Activated naive CD8-positive, alpha-beta T cell treated with anti-CD3 and anti-CD28 coated beads, Interleukin-2, amount 10 ng/mL, durations not matched to agents 7 days and 5 days (primary cell): ENCODE measurements at regions of chr1 and their contacts with region 1.

Region 1: DNA sequence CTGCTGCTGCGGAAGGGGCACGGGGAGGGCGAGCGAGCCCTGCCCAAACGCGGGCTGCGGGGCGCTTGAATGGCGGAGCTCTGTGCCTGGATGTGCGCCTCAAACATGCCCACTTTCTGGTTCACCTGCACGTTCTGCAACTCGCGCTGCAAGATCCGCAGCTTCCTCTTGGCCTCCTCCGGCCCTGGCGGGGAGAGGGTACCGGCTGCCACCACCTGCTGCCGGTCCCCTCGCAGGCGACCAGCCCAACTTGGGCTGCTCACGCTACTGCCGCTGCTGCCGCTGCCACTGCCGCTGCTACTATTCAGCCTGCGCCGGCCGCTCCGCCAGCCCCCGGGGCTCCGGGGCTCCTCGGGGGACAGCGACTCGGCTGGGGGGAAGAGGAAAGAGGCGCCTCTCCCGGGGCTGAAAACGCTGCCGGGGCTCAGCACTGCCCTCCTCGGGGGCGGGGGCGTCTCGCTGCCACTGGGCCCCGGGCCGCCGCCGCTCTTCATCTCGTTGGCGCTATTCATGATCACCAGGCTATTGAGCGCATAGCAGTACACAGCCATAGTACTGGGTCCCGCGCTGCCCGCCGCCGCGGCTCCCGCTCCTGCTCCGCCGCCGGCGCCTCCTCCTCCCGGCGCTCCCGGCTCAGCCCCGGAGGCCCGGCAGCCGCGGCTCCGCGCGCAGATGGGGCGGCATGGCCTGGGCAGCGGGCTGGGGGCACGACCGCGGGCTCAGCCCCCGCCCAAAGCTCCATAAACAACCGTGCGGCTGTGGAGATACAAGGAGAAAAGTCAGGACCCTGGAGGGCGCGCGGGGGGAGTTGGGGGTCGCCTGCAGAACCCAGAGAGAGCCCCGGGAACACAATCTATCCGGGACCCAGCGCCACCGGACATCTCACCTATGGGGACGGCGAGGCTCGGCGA is 1.9 kb downstream of the ITPKB start:
- DNase-seq: peak; percentile 74
- ATAC-seq: peak; percentile 34
- H3K4me3 Mint-ChIP-seq: peak overlapping the region; percentile 90
- H3K27ac Mint-ChIP-seq: peak overlapping the region; percentile 92
- H3K4me1 Mint-ChIP-seq: peaks cover 39% of the 10 kb centered on the region
- H3K27me3 Mint-ChIP-seq: no peaks in the 10 kb centered on the region

Region 2: DNA sequence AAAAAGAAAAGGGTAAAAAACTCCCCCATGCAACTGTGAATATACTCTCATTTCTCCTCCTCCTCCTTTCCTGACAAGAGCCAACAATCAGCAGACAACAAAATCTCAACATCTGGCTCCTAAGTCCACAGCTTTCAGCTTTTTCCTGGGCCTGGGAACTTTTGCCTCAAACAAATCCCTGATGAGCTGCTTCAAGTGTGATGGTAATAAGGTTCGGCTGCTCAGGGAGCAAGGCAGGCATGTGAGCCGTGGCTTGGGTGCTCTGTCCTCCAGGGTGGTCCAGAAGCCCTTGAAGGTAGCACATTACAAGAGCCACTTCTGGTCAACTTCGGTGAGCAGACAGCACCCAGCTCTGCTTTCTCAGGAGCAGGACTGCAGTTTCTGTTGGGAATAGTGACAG is 44.3 kb before region 1 on chr1:
- POLR2A ChIA-PET with region 1: no interaction called
- DNase-seq: no peak
- ATAC-seq: no peak
- H3K4me3 Mint-ChIP-seq: no peak overlapping the region
- H3K27ac Mint-ChIP-seq: peak overlapping the region; percentile 4
- H3K4me1 Mint-ChIP-seq: peaks cover 76% of the 10 kb centered on the region
- H3K27me3 Mint-ChIP-seq: no peaks in the 10 kb centered on the region

Region 3: GRCh38 chr1:226702957-226703831 is 34.0 kb before region 1 on chr1:
- POLR2A ChIA-PET with region 1: interaction called, 11 read pairs
- DNase-seq: peak; percentile 88
- ATAC-seq: peak; percentile 82
- H3K4me3 Mint-ChIP-seq: peak overlapping the region; percentile 86
- H3K27ac Mint-ChIP-seq: peak overlapping the region; percentile 87
- H3K4me1 Mint-ChIP-seq: peaks cover 49% of the 10 kb centered on the region
- H3K27me3 Mint-ChIP-seq: no peaks in the 10 kb centered on the region

Region 4: DNA sequence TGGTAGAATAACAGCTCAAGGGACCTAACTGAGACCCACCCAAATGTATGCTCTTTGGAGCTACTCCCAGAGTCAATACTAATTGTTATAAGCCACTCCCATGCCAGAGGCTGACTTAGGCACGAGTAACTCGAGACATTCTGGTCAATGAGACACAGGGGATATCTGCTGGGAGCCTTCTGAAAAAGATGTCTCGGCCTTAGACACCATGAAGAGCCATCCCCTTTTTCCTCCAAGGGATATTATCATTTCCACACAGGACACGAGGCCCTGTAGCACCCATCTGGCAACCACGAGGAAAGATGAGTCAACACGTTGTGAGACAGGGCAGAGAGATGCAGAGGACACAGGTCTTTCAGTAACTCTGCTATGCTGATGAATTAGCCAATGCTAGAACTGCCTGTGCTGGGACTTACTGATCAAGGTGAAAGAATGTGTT is 28.8 kb before region 1 on chr1:
- POLR2A ChIA-PET with region 1: interaction called, 43 read pairs
- DNase-seq: no peak
- ATAC-seq: no peak
- H3K4me3 Mint-ChIP-seq: peak overlapping the region; percentile 49
- H3K27ac Mint-ChIP-seq: peak overlapping the region; percentile 85
- H3K4me1 Mint-ChIP-seq: peaks cover 65% of the 10 kb centered on the region
- H3K27me3 Mint-ChIP-seq: no peaks in the 10 kb centered on the region

Region 5: DNA sequence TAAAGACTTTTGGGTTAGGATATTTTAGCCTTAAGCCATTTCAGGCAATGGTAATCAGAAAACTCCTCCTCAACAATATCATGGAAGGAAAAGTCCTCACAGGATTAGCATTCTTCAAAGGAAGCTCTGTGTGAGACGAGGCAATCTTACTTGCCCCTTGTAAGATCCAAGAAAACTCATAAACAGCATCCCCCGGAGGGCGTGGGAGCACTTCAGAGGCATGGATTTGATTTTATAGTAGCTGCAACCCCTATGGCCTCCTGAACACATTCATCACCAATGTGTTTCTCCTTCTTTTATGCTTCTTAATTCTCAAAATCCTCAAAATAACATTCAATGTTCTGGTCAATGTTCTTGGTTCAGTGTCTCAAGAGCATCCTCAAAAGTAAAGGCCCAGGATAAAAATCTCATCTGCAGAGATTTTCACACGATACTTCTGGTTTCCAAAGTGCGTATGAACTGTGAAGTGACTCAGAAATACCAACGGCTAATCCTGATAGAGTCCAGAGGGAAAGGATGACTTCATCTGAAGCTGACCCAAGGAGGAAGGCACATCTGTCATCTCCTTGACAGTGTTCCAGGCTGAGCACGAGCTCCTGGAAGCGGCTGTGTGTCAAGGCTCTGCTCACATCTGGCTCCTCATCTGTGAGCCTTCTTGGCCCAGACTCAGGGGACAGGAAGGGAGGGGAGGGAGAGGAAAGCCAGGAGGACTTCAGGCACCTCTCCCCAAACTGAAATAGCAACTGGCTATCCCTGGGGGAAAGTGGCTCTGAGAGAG is 84.0 kb after region 1 on chr1:
- POLR2A ChIA-PET with region 1: no interaction called
- DNase-seq: no peak
- ATAC-seq: no peak
- H3K4me3 Mint-ChIP-seq: no peak overlapping the region
- H3K27ac Mint-ChIP-seq: no peak overlapping the region
- H3K4me1 Mint-ChIP-seq: no peaks in the 10 kb centered on the region
- H3K27me3 Mint-ChIP-seq: peaks cover 2% of the 10 kb centered on the region